Activated CD8-positive, alpha-beta T cell treated with anti-CD3 and anti-CD28 coated beads, Interleukin-2, amount 10 ng/mL, durations not matched to agents 7 days and 5 days (primary cell): ENCODE measurements at regions of chr16 and their contacts with region 1.

Region 1: DNA sequence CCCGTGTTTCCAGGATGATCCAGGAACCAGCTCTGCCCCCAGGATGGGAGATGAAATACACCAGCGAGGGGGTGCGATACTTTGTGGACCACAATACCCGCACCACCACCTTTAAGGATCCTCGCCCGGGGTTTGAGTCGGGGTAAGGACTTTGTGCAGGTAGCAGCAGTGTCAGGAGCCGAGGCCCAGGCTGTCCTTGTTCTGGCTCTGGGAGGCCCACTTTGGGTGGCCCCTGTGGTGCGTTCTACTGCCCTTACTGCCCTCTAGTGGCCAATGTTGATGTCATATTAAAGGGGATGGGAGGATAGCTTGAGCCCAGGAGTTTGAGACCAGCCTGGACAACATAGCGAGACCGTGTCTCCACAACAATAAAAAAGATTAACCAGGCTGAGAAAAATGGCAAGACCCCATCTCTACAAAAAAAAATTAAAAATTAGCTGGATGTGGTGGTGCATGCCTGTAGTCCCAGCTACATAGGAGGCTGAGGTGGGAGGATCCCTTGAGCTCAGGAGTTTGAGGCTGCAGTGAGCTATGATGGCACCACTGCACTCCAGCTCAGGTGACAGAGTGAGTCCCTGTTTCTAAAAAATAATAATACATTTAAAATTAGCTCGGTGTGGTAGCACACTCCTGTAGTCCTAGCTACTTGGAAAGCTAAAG is 20.9 kb upstream of the CLEC18A start:
- DNase-seq: peak; percentile 69
- ATAC-seq: peak; percentile 78
- H3K4me3 Mint-ChIP-seq: no peak overlapping the region
- H3K27ac Mint-ChIP-seq: no peak overlapping the region
- H3K4me1 Mint-ChIP-seq: no peaks in the 10 kb centered on the region
- H3K27me3 Mint-ChIP-seq: no peaks in the 10 kb centered on the region

Region 2: GRCh38 chr16:69709456-69710084 is 220.7 kb before region 1 on chr16:
- CTCF ChIA-PET with region 1: interaction called, 10 read pairs
- POLR2A ChIA-PET with region 1: no interaction called
- DNase-seq: no peak
- ATAC-seq: peak; percentile 58
- H3K4me3 Mint-ChIP-seq: no peak overlapping the region
- H3K27ac Mint-ChIP-seq: no peak overlapping the region
- H3K4me1 Mint-ChIP-seq: no peaks in the 10 kb centered on the region
- H3K27me3 Mint-ChIP-seq: no peaks in the 10 kb centered on the region

Region 3: DNA sequence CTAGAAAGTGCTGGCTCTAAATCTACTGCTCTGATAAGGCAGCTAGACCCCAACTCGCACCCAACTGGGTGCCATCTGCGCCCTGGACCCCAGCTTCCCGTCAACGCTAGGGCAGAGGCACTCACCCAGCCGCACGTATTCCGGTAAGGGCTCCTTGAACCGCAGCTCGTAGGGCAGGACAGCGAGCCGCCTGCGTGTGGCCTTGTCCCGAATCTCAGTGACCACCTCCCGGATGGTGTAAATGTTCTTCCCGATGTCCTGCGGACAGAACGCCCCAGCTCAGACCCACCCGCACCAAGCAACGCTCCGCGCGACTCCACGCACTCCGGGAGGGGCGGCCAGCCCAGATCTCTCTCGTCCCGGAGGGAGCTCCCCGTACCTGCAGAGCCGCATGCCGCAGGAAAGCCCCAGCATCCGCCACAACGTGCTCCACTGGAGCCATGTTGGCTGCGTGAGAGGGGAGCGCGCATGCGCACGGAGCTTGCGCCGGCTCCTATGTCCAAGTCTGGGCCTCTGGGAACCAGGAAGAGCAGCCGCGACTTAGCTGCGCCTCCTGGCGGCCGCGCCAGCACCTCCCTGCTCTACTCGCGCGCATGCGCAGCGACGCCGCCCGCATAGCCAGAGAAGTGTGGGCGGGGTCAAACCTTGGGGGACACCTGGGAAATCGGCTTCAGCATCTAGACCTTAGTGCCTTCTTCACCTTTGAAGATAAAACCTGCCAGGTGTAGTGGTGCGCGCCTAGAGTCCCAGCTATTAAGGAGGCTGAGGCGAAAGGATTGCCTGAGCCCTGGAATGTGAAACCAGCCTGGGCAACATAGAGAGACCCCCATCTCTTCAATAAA is 175.6 kb before region 1 on chr16 and contains the start of gene NOB1:
- CTCF ChIA-PET with region 1: interaction called, 10 read pairs
- POLR2A ChIA-PET with region 1: no interaction called
- DNase-seq: peak; percentile 97
- ATAC-seq: peak; percentile 99
- H3K4me3 Mint-ChIP-seq: peak within 1 kb of the TSS; percentile 100
- H3K27ac Mint-ChIP-seq: peak within 1 kb of the TSS; percentile 98
- H3K4me1 Mint-ChIP-seq: peaks cover 30% of the 10 kb centered on the region
- H3K27me3 Mint-ChIP-seq: no peaks in the 10 kb centered on the region
- total RNA-seq, gene NOB1: 53.3 to 58.8 TPM

Region 4: GRCh38 chr16:69796351-69797118 is 133.7 kb before region 1 on chr16:
- CTCF ChIA-PET with region 1: interaction called, 23 read pairs
- POLR2A ChIA-PET with region 1: interaction called, 3 read pairs
- DNase-seq: peak; percentile 44
- ATAC-seq: peak; percentile 55
- H3K4me3 Mint-ChIP-seq: no peak overlapping the region
- H3K27ac Mint-ChIP-seq: no peak overlapping the region
- H3K4me1 Mint-ChIP-seq: no peaks in the 10 kb centered on the region
- H3K27me3 Mint-ChIP-seq: no peaks in the 10 kb centered on the region

Region 5: DNA sequence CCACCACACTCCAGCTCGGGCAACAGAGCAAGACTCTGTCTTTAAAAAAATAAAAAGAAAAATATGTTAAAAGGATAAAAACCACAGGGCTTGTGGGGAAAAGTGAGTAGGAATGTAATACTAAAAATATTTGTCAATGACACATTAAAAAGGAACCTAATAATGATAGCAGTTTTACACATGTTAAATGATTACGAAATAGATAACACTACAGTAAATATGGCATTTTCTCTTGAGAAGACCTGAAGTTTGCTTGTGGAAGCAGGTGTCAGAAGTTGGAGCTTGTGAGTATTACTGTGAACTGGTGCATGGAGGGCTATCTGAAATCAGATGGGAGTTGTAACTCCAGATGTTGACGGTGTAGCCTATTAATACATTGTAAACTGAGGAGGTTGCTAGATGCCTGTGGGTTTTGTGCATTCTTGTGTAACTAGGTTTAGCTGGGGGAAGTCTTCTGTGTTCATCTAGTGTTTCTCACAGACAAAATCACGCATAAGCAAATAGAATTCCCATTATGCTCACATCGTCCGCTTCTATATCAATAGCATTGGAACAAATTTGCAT is 23.3 kb before region 1 on chr16:
- CTCF ChIA-PET with region 1: interaction called, 12 read pairs
- POLR2A ChIA-PET with region 1: no interaction called
- DNase-seq: no peak
- ATAC-seq: no peak
- H3K4me3 Mint-ChIP-seq: no peak overlapping the region
- H3K27ac Mint-ChIP-seq: no peak overlapping the region
- H3K4me1 Mint-ChIP-seq: no peaks in the 10 kb centered on the region
- H3K27me3 Mint-ChIP-seq: no peaks in the 10 kb centered on the region

Region 6: GRCh38 chr16:69917739-69918138 is 12.5 kb before region 1 on chr16:
- CTCF ChIA-PET with region 1: interaction called, 12 read pairs
- POLR2A ChIA-PET with region 1: no interaction called
- DNase-seq: no peak
- ATAC-seq: no peak
- H3K4me3 Mint-ChIP-seq: no peak overlapping the region
- H3K27ac Mint-ChIP-seq: no peak overlapping the region
- H3K4me1 Mint-ChIP-seq: no peaks in the 10 kb centered on the region
- H3K27me3 Mint-ChIP-seq: no peaks in the 10 kb centered on the region

Region 7: GRCh38 chr16:70162041-70162451 is 231.8 kb after region 1 on chr16:
- CTCF ChIA-PET with region 1: no interaction called
- POLR2A ChIA-PET with region 1: no interaction called
- DNase-seq: no peak
- ATAC-seq: no peak
- H3K4me3 Mint-ChIP-seq: no peak overlapping the region
- H3K27ac Mint-ChIP-seq: no peak overlapping the region
- H3K4me1 Mint-ChIP-seq: no peaks in the 10 kb centered on the region
- H3K27me3 Mint-ChIP-seq: no peaks in the 10 kb centered on the region